ENCODE measurements at regions of chr2 and their contacts with region 1.

Region 1: DNA sequence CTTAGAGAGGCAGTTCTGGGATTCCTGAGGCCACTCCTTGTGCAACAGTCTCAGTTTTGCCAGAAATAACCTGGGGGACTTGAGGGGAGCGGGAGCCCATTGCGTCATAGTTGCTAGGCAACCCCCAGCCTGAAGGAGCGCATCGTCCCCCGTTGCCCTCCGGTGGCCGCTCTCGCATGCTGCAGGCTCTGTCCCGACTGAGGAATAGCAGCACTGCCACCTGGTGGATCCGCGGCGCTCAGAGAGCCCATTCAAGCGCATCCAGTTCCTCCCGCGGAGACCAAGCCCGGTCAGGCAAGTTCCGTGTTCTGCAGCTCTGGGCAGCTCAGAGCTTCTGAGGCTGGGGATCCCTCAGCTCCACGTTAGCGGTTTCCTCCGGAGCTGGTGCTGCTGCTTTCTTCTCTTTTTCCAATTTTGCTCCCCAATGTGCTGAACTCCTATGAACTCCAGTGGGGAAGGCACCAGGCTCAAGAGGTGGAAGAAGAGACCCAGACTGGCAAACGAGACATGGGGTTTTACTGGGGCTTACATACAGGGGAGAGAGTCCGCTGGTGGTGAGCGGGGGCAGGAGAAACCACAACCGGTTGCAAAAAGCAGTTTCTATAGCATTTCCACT is 15.1 kb downstream of the SLC4A3 start:
- DNase-seq: peak; percentile 98
- H3K4me3 ChIP-seq: peak overlapping the region in 1 of 8 donors; percentile 26
- H3K27ac ChIP-seq: no peak overlapping the region
- H3K4me1 ChIP-seq: peaks cover 0 to 29% (median 11%) of the 10 kb centered on the region in 6 donors
- H3K27me3 ChIP-seq: peaks cover 0 to 56% (median 0%) of the 10 kb centered on the region in 7 donors
- CTCF ChIP-seq: peak; percentile 97 to 100 (median 99)
- POLR2A ChIP-seq: no peak

Region 2: GRCh38 chr2:219369447-219369861 is 273.1 kb before region 1 on chr2:
- intact Hi-C with region 1: no loop called
- DNase-seq: no peak
- H3K4me3 ChIP-seq: no peak overlapping the region
- H3K27ac ChIP-seq: no peak overlapping the region
- H3K4me1 ChIP-seq: peaks cover 0 to 3% (median 0%) of the 10 kb centered on the region in 6 donors
- H3K27me3 ChIP-seq: no peaks in the 10 kb centered on the region
- CTCF ChIP-seq: no peak
- POLR2A ChIP-seq: no peak

Region 3: DNA sequence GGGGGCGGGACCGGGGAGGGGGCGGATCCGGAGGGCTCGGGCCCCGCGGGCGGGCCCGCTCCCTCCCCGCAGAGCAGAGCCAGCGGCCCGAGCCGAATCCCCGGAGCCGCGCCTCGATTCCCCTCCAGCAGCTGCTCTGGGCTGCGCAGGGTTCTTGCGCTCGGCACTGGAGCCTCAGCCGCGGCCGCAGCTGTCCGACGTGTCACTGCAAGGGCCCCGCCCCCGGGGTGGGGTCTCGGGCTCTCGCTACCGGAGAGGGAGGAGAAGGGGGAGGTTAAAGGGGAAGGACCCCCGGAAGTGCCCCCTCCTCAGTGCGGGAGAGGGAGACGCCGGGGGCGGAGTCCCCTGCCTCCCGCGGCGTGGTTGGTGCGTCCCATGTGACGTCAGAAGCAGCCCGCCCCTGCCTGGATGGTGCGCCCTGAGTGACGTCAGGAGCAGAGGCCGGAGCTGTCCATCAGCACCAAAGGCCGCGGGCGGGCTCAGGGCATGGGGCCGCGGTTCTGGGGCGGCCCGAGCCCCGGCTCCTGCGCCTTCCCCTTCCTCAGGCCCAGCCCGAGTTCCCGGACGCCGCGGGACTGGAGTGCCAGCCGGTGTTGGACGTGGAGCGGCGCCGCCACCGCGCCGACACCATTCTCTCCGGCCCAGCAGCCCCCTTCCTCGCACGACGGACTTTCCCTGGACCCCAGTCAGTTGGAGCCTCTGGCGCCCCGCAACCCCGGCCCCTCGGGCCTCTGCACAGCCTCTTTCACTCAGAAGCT is 98.8 kb before region 1 on chr2 and contains the starts of genes CHPF and TMEM198:
- intact Hi-C with region 1: loop called (anchors 5 kb)
- DNase-seq: peak; percentile 96
- H3K4me3 ChIP-seq: peak within 1 kb of the TSS; percentile 36 to 83 (median 76)
- H3K27ac ChIP-seq: peak within 1 kb of the TSS; percentile 3 to 87 (median 84)
- H3K4me1 ChIP-seq: peaks cover 19 to 40% (median 35%) of the 10 kb centered on the region in 6 donors
- H3K27me3 ChIP-seq: peaks cover 0 to 98% (median 7%) of the 10 kb centered on the region in 7 donors
- CTCF ChIP-seq: no peak
- POLR2A ChIP-seq: no peak
- total RNA-seq, gene CHPF: 8.9 to 26.2 (median 15.4) TPM
- total RNA-seq, gene TMEM198: 0.39 to 2.8 (median 1.1) TPM